MCF 10A (cell line): ENCODE measurements at regions of chr2 and their contacts with region 1.

Region 1: GRCh38 chr2:37877457-37878315 is 47.4 kb upstream of the RMDN2 start:
- DNase-seq: peak; percentile 78
- H3K4me3 Mint-ChIP-seq: no peak overlapping the region
- H3K27ac Mint-ChIP-seq: no peak overlapping the region
- H3K4me1 Mint-ChIP-seq: peaks cover 4% of the 10 kb centered on the region
- H3K27me3 Mint-ChIP-seq: peaks cover 12% of the 10 kb centered on the region
- CTCF ChIP-seq: peak; percentile 79

Region 2: GRCh38 chr2:37287966-37288365 is 589.7 kb before region 1 on chr2:
- CTCF ChIA-PET with region 1: interaction called, 3 read pairs
- POLR2A ChIA-PET with region 1: interaction called, 3 read pairs
- intact Hi-C with region 1: loop called (anchors 2 kb)
- DNase-seq: peak; percentile 47
- H3K4me3 Mint-ChIP-seq: no peak overlapping the region
- H3K27ac Mint-ChIP-seq: no peak overlapping the region
- H3K4me1 Mint-ChIP-seq: peaks cover 12% of the 10 kb centered on the region
- H3K27me3 Mint-ChIP-seq: no peaks in the 10 kb centered on the region
- CTCF ChIP-seq: peak; percentile 24

Region 3: GRCh38 chr2:37405781-37406180 is 471.9 kb before region 1 on chr2:
- CTCF ChIA-PET with region 1: interaction called, 172 read pairs
- POLR2A ChIA-PET with region 1: no interaction called
- intact Hi-C with region 1: no loop called
- DNase-seq: no peak
- H3K4me3 Mint-ChIP-seq: no peak overlapping the region
- H3K27ac Mint-ChIP-seq: no peak overlapping the region
- H3K4me1 Mint-ChIP-seq: no peaks in the 10 kb centered on the region
- H3K27me3 Mint-ChIP-seq: no peaks in the 10 kb centered on the region
- CTCF ChIP-seq: no peak

Region 4: DNA sequence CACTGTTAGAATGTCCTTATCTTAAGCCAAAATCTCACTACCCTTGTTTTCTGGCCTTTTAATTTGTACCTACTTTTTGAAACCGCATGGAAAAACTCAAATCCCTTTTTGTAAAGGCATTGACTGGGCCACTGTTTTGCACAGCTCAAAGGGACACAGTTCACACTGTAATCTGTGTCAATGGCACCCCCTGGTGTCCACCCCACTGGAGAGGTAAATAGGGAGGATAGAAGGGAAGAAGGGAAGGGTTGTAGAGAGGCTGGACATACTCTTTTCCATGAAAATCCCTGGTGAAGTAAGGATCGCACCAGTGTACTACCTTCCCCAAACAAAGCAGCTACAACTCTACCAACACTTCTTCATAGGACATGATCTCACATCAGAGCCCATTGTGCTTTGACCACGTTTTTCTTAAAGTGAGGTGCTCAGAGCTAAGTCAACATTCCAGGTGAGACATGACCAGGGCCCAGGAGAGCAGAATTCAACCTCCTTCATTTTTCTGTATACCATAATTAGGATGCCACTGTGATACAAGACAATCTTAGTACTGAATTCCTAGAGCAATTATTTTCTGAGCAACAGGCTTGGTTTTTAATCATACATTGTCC is 45.0 kb before region 1 on chr2:
- CTCF ChIA-PET with region 1: interaction called, 92 read pairs
- POLR2A ChIA-PET with region 1: no interaction called
- intact Hi-C with region 1: loop called (anchors 1 kb)
- DNase-seq: peak; percentile 89
- H3K4me3 Mint-ChIP-seq: no peak overlapping the region
- H3K27ac Mint-ChIP-seq: no peak overlapping the region
- H3K4me1 Mint-ChIP-seq: peaks cover 5% of the 10 kb centered on the region
- H3K27me3 Mint-ChIP-seq: no peaks in the 10 kb centered on the region
- CTCF ChIP-seq: peak; percentile 79

Region 5: GRCh38 chr2:37865640-37866039 is 12.0 kb before region 1 on chr2:
- CTCF ChIA-PET with region 1: interaction called, 14 read pairs
- POLR2A ChIA-PET with region 1: interaction called, 3 read pairs
- intact Hi-C with region 1: no loop called
- DNase-seq: no peak
- H3K4me3 Mint-ChIP-seq: no peak overlapping the region
- H3K27ac Mint-ChIP-seq: no peak overlapping the region
- H3K4me1 Mint-ChIP-seq: no peaks in the 10 kb centered on the region
- H3K27me3 Mint-ChIP-seq: peaks cover 65% of the 10 kb centered on the region
- CTCF ChIP-seq: no peak

Region 6: DNA sequence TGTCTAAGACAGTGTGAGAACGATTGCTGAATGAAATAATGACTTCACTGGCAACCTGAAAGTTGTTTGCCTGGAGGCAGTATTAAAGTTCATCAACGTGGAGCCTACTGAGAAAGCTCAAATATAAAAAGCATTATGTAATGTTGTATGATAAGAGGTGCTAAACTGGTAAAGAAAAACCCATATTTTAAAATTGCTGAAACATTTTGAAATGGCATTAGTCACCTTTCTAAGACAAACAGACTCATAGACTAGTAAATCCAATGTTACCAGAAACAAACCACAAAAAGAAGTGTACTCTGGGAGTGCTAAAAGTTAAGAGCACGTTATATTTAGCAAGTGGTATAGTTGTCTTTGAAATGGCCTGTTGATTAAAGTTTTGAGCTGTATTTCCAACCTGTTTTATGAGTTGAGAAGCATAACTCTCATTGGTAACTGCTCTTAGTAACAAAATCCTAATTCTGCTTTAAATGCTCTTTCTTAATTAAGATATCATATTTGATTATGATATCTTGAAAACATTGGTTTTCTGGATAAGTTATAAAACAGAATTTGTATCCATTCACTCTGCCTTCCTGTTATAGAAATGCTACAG is 135.6 kb after region 1 on chr2:
- CTCF ChIA-PET with region 1: no interaction called
- POLR2A ChIA-PET with region 1: no interaction called
- intact Hi-C with region 1: no loop called
- DNase-seq: peak; percentile 66
- H3K4me3 Mint-ChIP-seq: no peak overlapping the region
- H3K27ac Mint-ChIP-seq: no peak overlapping the region
- H3K4me1 Mint-ChIP-seq: peaks cover 30% of the 10 kb centered on the region
- H3K27me3 Mint-ChIP-seq: no peaks in the 10 kb centered on the region
- CTCF ChIP-seq: no peak